ENCODE measurements at regions of chr4 and their contacts with region 1.

Region 1: GRCh38 chr4:38310446-38311043 is 350.3 kb downstream of the PTTG2 start:
- DNase-seq: peak; percentile 83 to 91 (median 86)
- H3K4me3 ChIP-seq: peak overlapping the region in 1 of 2 donors; percentile 41
- H3K4me3 Mint-ChIP-seq: peak overlapping the region; percentile 64 to 88 (median 76)
- H3K27ac ChIP-seq: peak overlapping the region; percentile 33
- H3K27ac Mint-ChIP-seq: peak overlapping the region; percentile 84 to 96 (median 92)
- H3K4me1 ChIP-seq: peaks cover 53% of the 10 kb centered on the region
- H3K4me1 Mint-ChIP-seq: peaks cover 39 to 71% (median 54%) of the 10 kb centered on the region in 4 donors
- H3K27me3 ChIP-seq: no peaks in the 10 kb centered on the region
- H3K27me3 Mint-ChIP-seq: no peaks in the 10 kb centered on the region

Region 2: GRCh38 chr4:38138363-38138762 is 172.2 kb before region 1 on chr4:
- CTCF ChIA-PET with region 1: no interaction called
- POLR2A ChIA-PET with region 1: no interaction called
- intact Hi-C with region 1: no loop called
- DNase-seq: no peak
- H3K4me3 ChIP-seq: no peak overlapping the region
- H3K4me3 Mint-ChIP-seq: no peak overlapping the region
- H3K27ac ChIP-seq: no peak overlapping the region
- H3K27ac Mint-ChIP-seq: peak overlapping the region in 2 of 7 donors; percentile 8 to 62
- H3K4me1 ChIP-seq: peaks cover 3% of the 10 kb centered on the region
- H3K4me1 Mint-ChIP-seq: peaks cover 4 to 14% (median 6%) of the 10 kb centered on the region in 4 donors
- H3K27me3 ChIP-seq: no peaks in the 10 kb centered on the region
- H3K27me3 Mint-ChIP-seq: no peaks in the 10 kb centered on the region

Region 3: GRCh38 chr4:38243388-38244053 is 67.0 kb before region 1 on chr4:
- CTCF ChIA-PET with region 1: interaction called, 4 read pairs
- POLR2A ChIA-PET with region 1: interaction called, 3 read pairs
- intact Hi-C with region 1: loop called (anchors 5 kb)
- DNase-seq: peak in 1 of 5 donors; percentile 16
- H3K4me3 ChIP-seq: no peak overlapping the region
- H3K4me3 Mint-ChIP-seq: peak overlapping the region in 6 of 8 donors; percentile 3 to 79 (median 56)
- H3K27ac ChIP-seq: no peak overlapping the region
- H3K27ac Mint-ChIP-seq: peak overlapping the region in 6 of 7 donors; percentile 31 to 89 (median 83)
- H3K4me1 ChIP-seq: peaks cover 14% of the 10 kb centered on the region
- H3K4me1 Mint-ChIP-seq: peaks cover 13 to 18% (median 17%) of the 10 kb centered on the region in 4 donors
- H3K27me3 ChIP-seq: no peaks in the 10 kb centered on the region
- H3K27me3 Mint-ChIP-seq: no peaks in the 10 kb centered on the region